ENCODE measurements at regions of chr1 and their contacts with region 1.

Region 1: DNA sequence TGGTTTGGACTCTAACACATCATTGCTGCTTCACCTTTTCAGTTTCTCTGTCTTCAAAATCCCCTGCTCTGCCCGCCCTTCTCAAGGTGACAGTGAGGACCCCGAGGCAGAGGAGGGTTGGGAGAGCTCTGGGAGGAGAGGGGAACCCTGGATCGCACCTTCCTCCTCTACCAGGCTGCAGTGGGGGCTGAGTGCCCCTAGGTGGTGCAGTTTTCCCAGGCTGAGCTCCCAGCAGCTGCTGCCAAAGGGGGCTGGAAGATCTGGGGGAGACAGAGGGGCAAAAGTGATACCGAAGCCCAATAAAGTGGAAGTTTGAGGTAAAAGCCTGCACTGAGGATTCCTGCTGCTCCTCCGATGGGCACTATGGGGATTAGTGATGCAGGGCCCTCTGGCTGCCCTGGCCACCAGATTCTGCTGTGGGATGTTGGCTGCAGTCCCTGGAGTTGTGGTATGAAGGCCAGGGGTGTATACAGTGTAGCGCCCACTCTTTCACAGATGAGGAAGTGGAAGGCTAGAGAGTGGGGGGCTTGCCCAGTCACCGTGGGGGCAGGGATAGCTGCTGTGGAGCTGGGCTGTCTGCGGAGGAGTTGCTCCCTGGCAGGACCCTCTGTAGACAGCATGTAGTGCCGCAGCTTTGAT is 40.7 kb upstream of the SCMH1 start:
- DNase-seq: peak; percentile 30
- H3K4me3 ChIP-seq: no peak overlapping the region
- H3K27ac ChIP-seq: no peak overlapping the region
- H3K4me1 ChIP-seq: peaks cover 11% of the 10 kb centered on the region
- H3K27me3 ChIP-seq: peaks cover 0 to 4% of the 10 kb centered on the region in 2 experiments
- CTCF ChIP-seq: peak; percentile 80 to 91
- POLR2A ChIP-seq: no peak

Region 2: DNA sequence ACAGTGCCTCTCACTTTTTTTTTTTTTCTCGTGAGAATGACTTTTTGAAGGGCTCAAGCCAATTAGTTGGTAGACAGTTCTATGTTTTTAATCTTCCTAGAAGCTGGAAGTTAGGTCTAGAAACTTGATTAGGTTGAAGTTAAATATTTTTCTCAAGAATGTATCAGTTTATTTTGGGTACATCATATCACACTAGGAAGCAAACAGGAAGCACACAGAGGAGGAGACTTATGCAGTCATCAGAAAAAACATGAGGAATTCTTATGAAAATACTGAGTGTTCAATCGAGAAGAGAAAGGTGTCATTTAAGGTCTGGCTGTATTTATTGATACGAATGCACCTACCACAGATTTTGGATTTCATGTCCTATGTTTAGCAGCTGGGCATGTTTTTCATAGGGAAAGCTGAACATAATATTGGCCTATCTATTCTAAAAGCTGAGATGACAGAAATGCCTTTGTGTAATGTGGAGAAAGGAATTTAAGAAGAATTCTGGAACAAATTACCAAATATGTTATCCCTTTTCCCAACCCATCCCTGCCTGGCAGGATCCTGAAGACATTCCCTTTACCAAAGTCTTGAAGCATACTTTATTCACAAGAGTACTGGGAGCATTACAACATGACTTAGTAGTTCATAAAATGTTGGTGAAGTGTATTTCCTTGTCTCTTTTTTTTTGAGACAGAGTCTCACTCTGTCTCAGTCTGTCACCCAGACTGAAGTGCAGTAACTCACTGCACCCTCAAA is 850.0 kb before region 1 on chr1:
- CTCF ChIA-PET with region 1: no interaction called
- POLR2A ChIA-PET with region 1: no interaction called
- dilution Hi-C with region 1: no loop called
- intact Hi-C with region 1: no loop called
- DNase-seq: peak; percentile 3
- H3K4me3 ChIP-seq: no peak overlapping the region
- H3K27ac ChIP-seq: no peak overlapping the region
- H3K4me1 ChIP-seq: peaks cover 2% of the 10 kb centered on the region
- H3K27me3 ChIP-seq: no peaks in the 10 kb centered on the region
- CTCF ChIP-seq: no peak
- POLR2A ChIP-seq: no peak

Region 3: DNA sequence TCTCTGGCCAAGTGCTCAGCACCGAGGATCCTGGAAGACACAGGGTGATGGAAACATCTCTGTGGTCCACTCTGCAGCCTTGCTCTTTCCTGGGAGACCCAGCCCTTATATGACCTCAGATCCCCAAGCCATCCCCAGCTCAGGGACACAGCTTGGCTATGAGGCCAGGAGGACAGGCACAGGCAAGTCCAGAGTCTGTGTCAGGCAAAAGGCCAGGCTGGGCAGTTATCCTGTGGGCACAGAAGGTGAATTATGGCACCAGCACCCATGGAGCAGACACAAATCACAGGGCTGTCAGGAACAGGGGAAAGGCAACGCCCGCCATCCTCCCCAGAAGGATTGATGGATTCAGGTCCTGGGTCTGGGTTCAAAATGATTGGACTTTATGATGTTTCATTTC is 11.4 kb after region 1 on chr1:
- CTCF ChIA-PET with region 1: interaction called, 25 read pairs
- POLR2A ChIA-PET with region 1: no interaction called
- dilution Hi-C with region 1: no loop called
- intact Hi-C with region 1: no loop called
- DNase-seq: no peak
- H3K4me3 ChIP-seq: no peak overlapping the region
- H3K27ac ChIP-seq: no peak overlapping the region
- H3K4me1 ChIP-seq: no peaks in the 10 kb centered on the region
- H3K27me3 ChIP-seq: peaks cover 6 to 23% of the 10 kb centered on the region in 2 experiments
- CTCF ChIP-seq: no peak
- POLR2A ChIP-seq: no peak

Region 4: DNA sequence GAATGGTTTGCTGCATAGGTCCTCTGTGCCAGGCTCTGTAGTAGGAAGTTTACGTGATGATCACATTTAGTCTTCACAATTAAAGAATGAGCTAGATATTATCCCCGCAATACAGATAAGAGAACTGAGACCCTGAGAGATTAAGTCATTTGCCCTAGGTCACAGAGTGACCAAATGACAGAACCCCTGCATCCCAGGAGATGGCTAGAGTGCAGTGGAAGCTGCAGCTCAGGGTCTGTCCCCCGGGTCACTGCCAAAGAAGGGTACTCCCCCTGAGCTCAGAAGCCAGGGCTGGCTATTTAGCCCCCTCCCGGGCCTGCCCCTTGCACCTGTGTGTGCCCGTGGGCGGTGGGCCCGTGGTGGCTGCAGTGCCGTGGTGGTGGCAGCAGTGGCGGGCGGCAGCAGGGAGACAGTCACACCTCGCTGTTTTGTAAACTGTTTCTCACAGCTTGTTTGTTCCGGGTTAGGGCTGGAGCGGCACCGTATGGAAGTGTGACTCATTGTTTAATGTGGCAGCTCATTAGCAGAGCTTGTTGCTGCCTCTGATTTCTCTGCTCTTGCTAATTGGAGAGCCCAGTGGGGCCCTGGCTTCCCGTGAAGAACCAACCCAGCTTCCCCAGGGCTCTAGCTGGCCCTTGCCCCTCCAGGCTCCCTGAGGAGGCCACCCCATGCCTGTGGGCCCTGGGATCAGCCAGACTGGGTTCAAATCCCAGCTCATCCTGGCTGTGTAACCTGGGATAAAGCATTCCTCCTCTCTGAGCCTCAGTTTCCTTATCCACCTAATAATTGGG is 59.2 kb after region 1 on chr1:
- CTCF ChIA-PET with region 1: interaction called, 18 read pairs
- POLR2A ChIA-PET with region 1: no interaction called
- dilution Hi-C with region 1: no loop called
- intact Hi-C with region 1: no loop called
- DNase-seq: peak; percentile 77
- H3K4me3 ChIP-seq: peak overlapping the region in 1 of 3 experiments; percentile 29
- H3K27ac ChIP-seq: peak overlapping the region; percentile 51
- H3K4me1 ChIP-seq: peaks cover 15% of the 10 kb centered on the region
- H3K27me3 ChIP-seq: peaks cover 4 to 6% of the 10 kb centered on the region in 2 experiments
- CTCF ChIP-seq: no peak
- POLR2A ChIP-seq: no peak

Region 5: DNA sequence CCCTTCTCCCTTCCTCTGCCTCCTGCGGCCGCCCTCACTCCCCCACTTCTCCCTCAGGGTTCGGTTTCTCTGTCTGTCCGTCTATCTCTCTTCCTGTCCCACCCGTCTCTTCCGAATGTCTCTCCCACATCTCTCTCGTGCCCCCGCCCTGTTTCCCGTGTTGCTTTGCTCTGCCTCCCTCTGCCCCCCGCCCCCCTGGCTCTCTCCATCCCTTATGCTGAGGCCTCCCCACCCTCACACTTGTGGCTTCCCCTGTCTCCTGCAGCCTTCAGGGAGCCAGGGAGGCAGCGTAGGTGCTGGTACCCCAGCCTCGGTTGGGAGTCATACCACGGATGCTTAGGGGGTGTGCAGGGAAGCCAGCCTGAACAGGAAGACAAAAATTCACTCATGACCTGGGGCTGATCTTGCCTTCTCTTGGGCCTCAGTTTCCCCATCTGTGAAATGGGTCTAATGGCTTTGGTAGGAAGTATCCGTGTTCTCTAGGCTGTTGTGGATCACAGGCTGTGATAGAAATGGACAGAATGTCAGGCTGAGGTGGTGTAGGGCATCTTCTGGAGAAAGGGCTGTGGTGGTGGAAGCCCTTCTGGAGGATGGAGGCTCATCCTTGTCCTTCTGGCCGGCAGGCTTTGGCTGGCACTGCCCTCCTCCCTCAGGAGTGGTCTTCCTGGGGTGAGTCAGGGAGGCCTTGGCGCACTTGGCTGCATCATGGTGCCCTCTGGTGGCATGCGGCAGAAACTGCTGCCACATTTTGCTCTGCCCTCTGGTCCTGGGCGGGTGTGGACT is 133.9 kb after region 1 on chr1:
- CTCF ChIA-PET with region 1: interaction called, 114 read pairs
- POLR2A ChIA-PET with region 1: no interaction called
- dilution Hi-C with region 1: no loop called
- intact Hi-C with region 1: loop called (anchors 1 kb)
- DNase-seq: peak; percentile 71
- H3K4me3 ChIP-seq: no peak overlapping the region
- H3K27ac ChIP-seq: no peak overlapping the region
- H3K4me1 ChIP-seq: peaks cover 9% of the 10 kb centered on the region
- H3K27me3 ChIP-seq: no peaks in the 10 kb centered on the region
- CTCF ChIP-seq: peak; percentile 82 to 96
- POLR2A ChIP-seq: no peak

Region 6: GRCh38 chr1:41432481-41433280 is 149.9 kb after region 1 on chr1:
- CTCF ChIA-PET with region 1: interaction called, 79 read pairs
- POLR2A ChIA-PET with region 1: no interaction called
- dilution Hi-C with region 1: no loop called
- intact Hi-C with region 1: loop called (anchors 1 kb)
- DNase-seq: peak; percentile 84
- H3K4me3 ChIP-seq: no peak overlapping the region
- H3K27ac ChIP-seq: no peak overlapping the region
- H3K4me1 ChIP-seq: peaks cover 27% of the 10 kb centered on the region
- H3K27me3 ChIP-seq: peaks cover 2 to 4% of the 10 kb centered on the region in 2 experiments
- CTCF ChIP-seq: peak; percentile 93 to 96
- POLR2A ChIP-seq: no peak